ENCODE measurements at regions of chr12 and their contacts with region 1.

Region 1: GRCh38 chr12:98998697-98999299 is 353.7 kb downstream of the APAF1 start:
- DNase-seq: no peak
- ATAC-seq: peak; percentile 64 to 89 (median 78)
- H3K4me3 ChIP-seq: no peak overlapping the region
- H3K27ac ChIP-seq: no peak overlapping the region
- H3K4me1 ChIP-seq: peaks cover 4% of the 10 kb centered on the region
- H3K27me3 ChIP-seq: no peaks in the 10 kb centered on the region
- CTCF ChIP-seq: peak; percentile 75

Region 2: GRCh38 chr12:98572010-98572409 is 426.8 kb before region 1 on chr12:
- intact Hi-C with region 1: loop called in 1 of 2 experiments (anchors 5 kb)
- DNase-seq: no peak
- ATAC-seq: no peak
- H3K4me3 ChIP-seq: no peak overlapping the region
- H3K27ac ChIP-seq: no peak overlapping the region
- H3K4me1 ChIP-seq: no peaks in the 10 kb centered on the region
- H3K27me3 ChIP-seq: no peaks in the 10 kb centered on the region
- CTCF ChIP-seq: no peak

Region 3: DNA sequence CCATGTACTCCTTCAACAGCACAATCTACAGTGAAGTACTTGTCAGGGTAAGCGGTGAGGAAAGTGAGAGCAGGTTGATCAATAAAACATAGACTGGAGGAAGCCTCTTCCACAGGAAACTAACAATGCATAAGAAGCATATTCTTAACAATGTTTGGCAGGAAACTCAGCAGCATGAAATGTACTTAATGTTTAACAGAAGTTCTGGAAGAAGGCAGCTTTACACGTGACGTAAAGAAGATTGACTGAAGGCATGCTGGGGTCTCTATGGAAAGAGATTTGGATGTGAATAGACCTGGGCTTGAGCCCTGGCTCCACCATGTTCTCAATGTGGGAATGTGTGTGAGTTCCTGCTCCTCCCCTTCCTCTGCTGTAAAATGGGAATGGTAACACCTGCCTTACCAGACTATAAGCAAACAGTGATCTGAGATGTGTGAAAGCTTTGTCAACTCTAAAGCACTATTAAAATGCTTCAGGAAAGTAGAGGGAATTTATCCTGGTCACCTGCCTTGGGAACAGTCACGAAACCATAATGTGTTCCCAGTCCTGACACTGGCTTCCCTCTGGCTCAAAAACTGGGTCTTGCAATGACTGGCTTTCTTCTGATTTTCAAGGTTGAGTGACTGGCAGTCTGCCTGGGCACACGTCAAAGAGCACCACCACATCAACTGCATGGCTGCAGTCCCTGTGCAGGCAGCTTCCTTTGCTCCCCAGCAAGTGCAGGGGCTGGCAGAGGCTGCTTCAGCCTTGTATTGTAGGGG is 30.9 kb after region 1 on chr12:
- intact Hi-C with region 1: no loop called
- DNase-seq: no peak
- ATAC-seq: no peak
- H3K4me3 ChIP-seq: no peak overlapping the region
- H3K27ac ChIP-seq: no peak overlapping the region
- H3K4me1 ChIP-seq: no peaks in the 10 kb centered on the region
- H3K27me3 ChIP-seq: no peaks in the 10 kb centered on the region
- CTCF ChIP-seq: no peak

Measured in psoas muscle (tissue), 8 donors.